ENCODE measurements at regions of chrX and their contacts with region 1.

Region 1: DNA sequence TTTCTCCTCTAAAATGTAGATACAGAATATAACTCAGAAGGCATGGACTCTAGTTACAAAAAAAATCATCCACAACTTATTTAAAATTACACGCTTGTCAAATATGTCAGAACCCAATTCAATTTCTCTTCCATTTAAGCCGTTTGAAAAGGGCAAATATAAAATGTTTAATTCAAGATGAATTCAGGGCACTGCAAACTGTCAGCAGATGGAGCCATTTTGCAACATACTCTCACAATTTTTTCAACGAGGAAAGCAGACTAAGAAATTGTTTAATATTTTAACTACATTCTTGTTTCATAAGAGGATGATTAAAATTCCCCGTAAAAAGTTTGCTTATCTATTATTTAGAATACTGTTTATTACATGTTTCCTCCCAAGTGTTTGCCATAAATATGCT is 321.3 kb upstream of the CPXCR1 start:
- DNase-seq: peak in 1 of 10 donors; percentile 7

Region 2: GRCh38 chrX:88613338-88613737 is 187.6 kb after region 1 on chrX:
- intact Hi-C with region 1: loop called (anchors 2 kb)
- DNase-seq: peak in 1 of 10 donors; percentile 8